Activated CD8-positive, alpha-beta T cell treated with anti-CD3 and anti-CD28 coated beads, Interleukin-2, amount 10 ng/mL, durations not matched to agents 7 days and 5 days (primary cell): ENCODE measurements at regions of chr14 and their contacts with region 1.

Region 1: DNA sequence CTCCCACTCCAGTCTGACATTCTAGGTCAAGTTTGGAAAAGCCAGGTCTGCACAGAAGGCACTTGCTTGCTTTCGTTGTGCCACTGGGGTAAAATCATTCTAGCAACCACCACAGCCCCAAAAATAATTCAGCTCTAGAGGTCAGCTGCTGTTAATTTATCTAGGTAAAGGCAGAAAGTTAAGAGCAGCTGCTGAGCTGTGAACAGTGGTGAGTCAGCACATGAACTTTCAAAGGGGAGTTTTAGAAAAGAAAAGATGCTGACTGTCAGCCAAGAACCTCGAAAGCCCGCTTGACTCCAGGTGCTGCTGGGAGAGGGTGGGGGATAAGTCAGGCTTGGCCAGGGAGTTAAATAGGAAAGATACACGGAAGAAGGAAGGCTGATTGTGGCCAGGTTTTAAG is 12.7 kb downstream of the CCDC197 start:
- DNase-seq: no peak
- ATAC-seq: no peak
- H3K4me3 Mint-ChIP-seq: no peak overlapping the region
- H3K27ac Mint-ChIP-seq: no peak overlapping the region
- H3K4me1 Mint-ChIP-seq: peaks cover 62% of the 10 kb centered on the region
- H3K27me3 Mint-ChIP-seq: peaks cover 15% of the 10 kb centered on the region

Region 2: DNA sequence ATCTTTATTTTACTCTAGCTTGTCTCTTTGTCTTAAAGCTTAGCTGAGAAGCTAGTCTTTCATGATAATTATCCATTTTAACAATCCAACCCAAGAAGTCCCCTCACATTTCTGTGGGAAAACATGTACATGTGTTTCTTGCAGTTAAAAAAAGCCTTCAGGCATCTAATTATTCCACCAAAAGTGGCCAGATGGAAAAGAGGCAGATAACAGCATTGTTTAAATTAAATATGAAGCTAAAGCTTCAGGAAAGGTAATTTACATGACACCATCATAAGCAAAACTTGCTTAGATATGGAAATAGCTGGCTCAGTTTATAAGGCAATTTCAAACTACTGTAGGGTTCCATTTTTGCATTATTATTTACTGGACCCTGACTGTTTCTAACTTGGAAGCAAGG is 403.7 kb before region 1 on chr14:
- CTCF ChIA-PET with region 1: no interaction called
- POLR2A ChIA-PET with region 1: no interaction called
- DNase-seq: no peak
- ATAC-seq: no peak
- H3K4me3 Mint-ChIP-seq: no peak overlapping the region
- H3K27ac Mint-ChIP-seq: no peak overlapping the region
- H3K4me1 Mint-ChIP-seq: no peaks in the 10 kb centered on the region
- H3K27me3 Mint-ChIP-seq: peaks cover 7% of the 10 kb centered on the region

Region 3: DNA sequence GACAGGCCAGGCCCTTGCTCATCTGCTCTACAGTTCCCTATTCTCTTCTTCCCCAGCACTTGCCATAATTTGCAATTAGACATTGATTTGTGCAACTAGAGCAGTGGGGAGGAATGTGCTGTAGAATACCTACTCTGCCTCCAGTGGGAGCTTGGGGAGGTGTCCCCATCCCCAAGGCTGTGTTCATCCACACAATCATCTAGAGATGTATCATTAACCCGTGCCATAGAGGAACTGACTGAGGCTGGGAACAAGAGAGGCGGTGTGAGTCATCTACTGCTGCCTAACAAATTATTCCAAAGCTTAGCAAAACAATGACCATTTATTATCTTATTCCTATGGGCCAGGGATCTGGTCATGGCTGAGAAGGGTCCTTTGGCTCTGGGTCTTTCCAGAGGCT is 11.2 kb after region 1 on chr14:
- CTCF ChIA-PET with region 1: interaction called, 12 read pairs
- POLR2A ChIA-PET with region 1: interaction called, 4 read pairs
- DNase-seq: no peak
- ATAC-seq: no peak
- H3K4me3 Mint-ChIP-seq: no peak overlapping the region
- H3K27ac Mint-ChIP-seq: peak overlapping the region; percentile 70
- H3K4me1 Mint-ChIP-seq: peaks cover 38% of the 10 kb centered on the region
- H3K27me3 Mint-ChIP-seq: peaks cover 35% of the 10 kb centered on the region

Region 4: DNA sequence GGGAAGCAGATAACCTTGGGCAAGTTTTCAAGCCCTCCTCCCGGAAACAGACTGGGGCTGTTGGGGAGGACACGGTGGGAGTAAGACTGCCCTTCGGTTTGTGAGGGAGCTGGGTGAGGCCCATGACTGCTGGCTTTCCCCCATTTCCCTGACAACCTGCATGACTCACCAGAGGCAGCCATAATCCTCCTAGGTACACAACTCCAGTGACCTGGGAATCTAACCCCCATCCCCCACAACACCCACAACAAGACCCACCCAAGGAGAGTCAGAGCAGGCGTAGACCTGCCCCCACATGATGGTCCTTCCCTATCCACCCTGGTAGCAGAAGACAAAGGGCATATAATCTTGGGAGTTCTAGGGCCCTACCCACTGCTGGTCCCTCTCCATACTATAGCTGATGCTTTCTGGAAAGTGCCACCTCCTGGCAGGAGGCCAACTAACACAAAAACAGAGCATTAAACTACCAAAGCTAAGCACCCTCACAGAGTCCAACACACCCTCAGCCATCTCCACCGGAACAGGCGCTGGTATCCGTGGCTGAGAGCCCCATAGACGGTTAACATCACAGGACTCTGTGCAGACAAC is 56.4 kb after region 1 on chr14:
- CTCF ChIA-PET with region 1: no interaction called
- POLR2A ChIA-PET with region 1: no interaction called
- DNase-seq: no peak
- ATAC-seq: no peak
- H3K4me3 Mint-ChIP-seq: no peak overlapping the region
- H3K27ac Mint-ChIP-seq: no peak overlapping the region
- H3K4me1 Mint-ChIP-seq: peaks cover 55% of the 10 kb centered on the region
- H3K27me3 Mint-ChIP-seq: no peaks in the 10 kb centered on the region

Region 5: GRCh38 chr14:94269156-94269555 is 259.4 kb after region 1 on chr14:
- CTCF ChIA-PET with region 1: no interaction called
- POLR2A ChIA-PET with region 1: no interaction called
- DNase-seq: no peak
- ATAC-seq: no peak
- H3K4me3 Mint-ChIP-seq: no peak overlapping the region
- H3K27ac Mint-ChIP-seq: no peak overlapping the region
- H3K4me1 Mint-ChIP-seq: no peaks in the 10 kb centered on the region
- H3K27me3 Mint-ChIP-seq: peaks cover 14% of the 10 kb centered on the region